ENCODE measurements at regions of chr19 and their contacts with region 1.

Region 1: GRCh38 chr19:38658462-38659306 is 11.2 kb downstream of the ACTN4 start:
- DNase-seq: peak; percentile 70 to 98
- H3K4me3 ChIP-seq: peak overlapping the region; percentile 54
- H3K27ac ChIP-seq: peak overlapping the region; percentile 99
- H3K4me1 ChIP-seq: peaks cover 97% of the 10 kb centered on the region
- H3K27me3 ChIP-seq: no peaks in the 10 kb centered on the region
- CTCF ChIP-seq: no peak

Region 2: DNA sequence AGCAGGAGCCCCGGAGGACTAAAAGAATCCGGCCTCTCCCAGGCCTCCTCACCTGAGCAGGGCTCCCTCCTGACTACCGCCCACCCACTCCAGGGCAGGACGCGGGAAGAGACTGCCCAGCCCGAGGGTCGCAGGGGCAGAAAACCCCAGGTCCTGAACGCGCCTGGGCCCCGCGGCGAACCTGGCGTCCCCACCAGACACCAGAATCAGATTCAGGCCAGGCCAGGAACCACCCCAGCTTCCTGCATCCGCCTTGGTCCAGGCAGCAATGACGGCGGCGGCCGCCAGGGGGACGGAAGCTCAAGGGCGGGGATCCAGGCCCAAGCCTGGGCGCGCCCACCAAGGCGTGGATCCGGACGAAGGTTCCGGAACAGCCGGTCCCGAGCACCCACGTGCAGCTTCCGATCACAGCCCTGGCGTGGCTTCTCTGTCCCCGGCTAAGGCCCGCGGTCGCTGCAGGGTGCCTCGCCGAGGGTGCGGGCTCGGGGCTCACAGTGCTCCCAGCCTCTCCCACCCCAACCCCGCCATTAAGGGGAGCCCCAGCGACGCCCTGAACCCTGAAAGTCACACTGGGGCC is 111.0 kb after region 1 on chr19:
- CTCF ChIA-PET with region 1: no interaction called
- POLR2A ChIA-PET with region 1: interaction called, 10 read pairs
- intact Hi-C with region 1: no loop called
- DNase-seq: peak in 1 of 2 experiments; percentile 69
- H3K4me3 ChIP-seq: no peak overlapping the region
- H3K27ac ChIP-seq: no peak overlapping the region
- H3K4me1 ChIP-seq: no peaks in the 10 kb centered on the region
- H3K27me3 ChIP-seq: no peaks in the 10 kb centered on the region
- CTCF ChIP-seq: peak; percentile 80